ENCODE measurements at regions of chr11 and their contacts with region 1.

Region 1: DNA sequence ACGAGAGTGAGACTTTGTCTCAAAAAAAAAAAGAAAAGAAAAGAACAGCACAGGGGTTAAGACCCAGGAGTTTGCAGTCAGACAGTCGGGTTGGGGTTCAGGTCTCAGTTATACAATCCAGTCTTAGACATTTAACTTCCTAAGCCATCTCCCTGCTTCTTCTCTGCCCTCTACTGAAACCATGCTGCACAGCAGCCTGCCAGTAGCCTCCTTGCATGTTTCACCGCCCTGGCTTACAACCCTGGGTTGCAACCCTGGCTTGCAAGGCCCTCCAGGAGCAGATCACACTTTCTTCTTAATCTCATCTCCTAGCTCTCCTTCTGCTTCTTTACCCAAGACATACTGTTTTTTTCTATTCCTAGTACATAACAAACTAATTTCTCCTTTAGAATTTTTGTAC is 5.9 kb upstream of the B3GAT3 start:
- DNase-seq: no peak
- H3K4me3 Mint-ChIP-seq: no peak overlapping the region
- H3K27ac Mint-ChIP-seq: peak overlapping the region; percentile 27
- H3K4me1 Mint-ChIP-seq: peaks cover 2% of the 10 kb centered on the region
- H3K27me3 Mint-ChIP-seq: no peaks in the 10 kb centered on the region

Region 2: DNA sequence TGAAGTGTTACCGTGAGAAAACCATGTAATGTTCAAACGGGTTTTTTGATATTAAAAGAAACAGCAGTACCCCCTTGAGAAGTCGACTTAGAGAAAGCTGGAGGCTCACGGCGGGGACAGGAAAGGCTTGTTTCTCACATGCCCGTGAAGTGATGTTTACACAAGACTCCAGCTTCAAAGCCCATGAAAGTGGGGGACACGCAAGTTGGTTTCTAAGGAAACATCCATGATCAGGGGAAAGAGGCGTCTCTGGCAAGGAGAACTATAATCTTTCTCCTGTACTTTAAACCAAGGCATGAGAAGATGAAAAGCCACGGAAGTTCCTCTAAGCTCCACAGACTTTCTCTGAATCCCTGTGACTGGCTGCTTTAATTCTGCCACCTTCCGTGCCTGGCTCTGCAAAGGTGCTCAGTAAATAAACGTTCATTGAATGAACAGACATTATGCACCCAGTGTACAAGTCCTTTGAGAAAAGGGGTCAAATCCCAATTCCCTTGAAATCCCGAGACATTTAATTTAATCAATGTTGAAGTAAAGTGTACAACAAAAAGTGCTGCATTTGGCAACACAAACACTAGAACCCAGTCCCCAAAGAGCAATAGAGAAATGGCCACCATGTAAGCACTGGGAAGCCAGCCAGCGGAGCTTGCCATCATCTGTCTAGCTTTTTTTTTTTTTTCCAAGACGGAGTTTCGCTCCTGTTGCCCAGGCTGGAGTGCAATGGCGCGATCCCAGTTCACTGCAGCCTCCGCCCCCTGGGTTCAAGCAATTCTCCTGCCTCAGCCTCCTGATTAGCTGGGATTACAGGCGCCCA is 139.8 kb before region 1 on chr11:
- CTCF ChIA-PET with region 1: no interaction called
- POLR2A ChIA-PET with region 1: no interaction called
- DNase-seq: no peak
- H3K4me3 Mint-ChIP-seq: no peak overlapping the region
- H3K27ac Mint-ChIP-seq: no peak overlapping the region
- H3K4me1 Mint-ChIP-seq: no peaks in the 10 kb centered on the region
- H3K27me3 Mint-ChIP-seq: no peaks in the 10 kb centered on the region

Region 3: DNA sequence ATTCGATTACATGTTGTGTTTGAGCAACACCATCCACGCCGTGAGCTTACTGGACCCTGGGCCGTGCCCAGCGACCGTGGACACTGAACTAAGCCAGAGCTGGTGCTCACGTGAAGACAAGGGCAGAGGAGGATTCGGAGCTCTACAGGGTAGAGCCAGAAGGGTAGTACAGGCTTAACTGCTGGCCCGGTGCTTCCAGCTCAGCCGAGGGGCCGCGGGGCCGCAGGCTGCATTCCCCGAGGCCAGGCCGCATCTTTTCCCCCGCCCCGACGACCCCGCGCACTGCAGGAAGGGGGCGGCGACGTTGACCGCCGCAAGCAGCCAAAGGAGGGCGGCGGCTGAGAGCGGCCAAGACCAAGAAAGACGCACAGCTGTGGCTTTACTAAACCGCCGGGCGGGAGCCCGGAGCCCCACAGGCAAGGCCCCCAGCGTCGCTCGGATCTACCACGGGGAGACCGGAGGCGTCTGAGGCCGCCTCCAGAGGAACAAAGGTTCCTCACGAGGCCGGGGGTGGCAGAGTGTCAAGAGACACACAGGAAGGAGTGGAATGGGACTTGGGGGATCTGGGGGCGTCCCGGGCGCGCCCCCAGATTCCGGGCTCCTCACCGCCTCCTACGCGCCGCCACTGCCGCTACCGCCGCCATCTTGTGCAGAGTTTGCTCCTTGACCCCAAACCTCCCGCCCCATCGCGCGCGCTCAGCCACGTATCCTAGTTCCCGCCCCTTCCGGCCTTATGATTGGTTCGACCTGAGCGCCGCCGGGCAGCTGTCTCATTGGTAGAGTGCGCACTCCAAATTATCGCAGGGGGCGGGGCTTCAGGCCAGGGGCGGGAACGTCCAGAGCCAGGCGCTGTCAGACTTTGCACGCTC is 18.5 kb after region 1 on chr11 and contains the start of gene GANAB:
- CTCF ChIA-PET with region 1: interaction called, 14 read pairs
- POLR2A ChIA-PET with region 1: no interaction called
- DNase-seq: peak; percentile 100
- H3K4me3 Mint-ChIP-seq: peak within 1 kb of the TSS; percentile 97
- H3K27ac Mint-ChIP-seq: peak within 1 kb of the TSS; percentile 95
- H3K4me1 Mint-ChIP-seq: peaks cover 42% of the 10 kb centered on the region
- H3K27me3 Mint-ChIP-seq: no peaks in the 10 kb centered on the region
- total RNA-seq, gene GANAB: 290 to 291 TPM

Measured in activated CD4-positive, alpha-beta T cell treated with anti-CD3 and anti-CD28 coated beads, Interleukin-2, amount 10 ng/mL, durations not matched to agents 7 days and 5 days (primary cell).